Ascending aorta (tissue), 2 donors: ENCODE measurements at regions of chr15 and their contacts with region 1.

Region 1: DNA sequence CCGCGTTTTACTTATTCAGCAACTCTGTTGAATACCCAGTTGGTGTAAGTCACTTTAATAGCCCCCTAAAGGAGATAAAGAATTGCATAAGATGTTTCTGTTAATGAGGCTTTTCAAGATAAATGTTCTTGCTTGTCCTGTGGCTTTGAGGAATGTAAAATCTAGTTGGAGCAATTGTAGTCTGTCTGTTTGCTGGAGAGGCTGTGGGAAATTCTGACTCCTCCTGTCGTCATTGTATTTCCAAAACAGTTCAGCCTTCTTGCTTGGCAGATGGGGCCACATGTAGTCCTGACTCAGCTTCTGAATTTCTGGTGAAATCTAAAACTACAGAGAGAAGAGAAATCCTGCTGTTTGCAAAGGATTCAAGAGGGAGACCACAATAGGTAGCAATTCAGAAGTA is 114.4 kb downstream of the RYR3 start:
- DNase-seq: peak in 1 of 2 donors; percentile 65
- H3K4me3 ChIP-seq: no peak overlapping the region
- H3K27ac ChIP-seq: no peak overlapping the region
- H3K4me1 ChIP-seq: no peaks in the 10 kb centered on the region
- H3K27me3 ChIP-seq: no peaks in the 10 kb centered on the region
- CTCF ChIP-seq: no peak

Region 2: DNA sequence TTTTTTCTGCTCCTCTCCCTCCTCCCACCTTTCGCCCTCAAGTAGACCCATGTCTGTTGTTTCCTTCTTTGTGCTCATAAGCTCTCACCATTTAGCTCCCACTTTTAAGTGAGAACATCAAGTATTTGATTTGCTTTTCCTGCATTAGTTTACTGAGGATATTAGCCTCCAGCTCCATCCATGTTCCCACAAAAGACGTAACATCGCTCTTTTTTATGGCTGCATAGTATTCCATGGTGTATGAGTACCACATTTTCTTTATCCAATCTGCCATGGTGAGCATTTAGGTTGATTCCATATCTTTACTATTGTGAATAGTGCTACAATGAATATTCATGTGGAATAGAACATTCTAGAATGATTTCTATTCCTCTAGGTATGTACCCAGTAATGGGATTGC is 64.2 kb after region 1 on chr15:
- intact Hi-C with region 1: loop called (anchors 10 kb)
- DNase-seq: no peak
- H3K4me3 ChIP-seq: no peak overlapping the region
- H3K27ac ChIP-seq: no peak overlapping the region
- H3K4me1 ChIP-seq: no peaks in the 10 kb centered on the region
- H3K27me3 ChIP-seq: no peaks in the 10 kb centered on the region
- CTCF ChIP-seq: no peak